Aorta (tissue), 5 donors: ENCODE measurements at regions of chr11 and their contacts with region 1.

Region 1: DNA sequence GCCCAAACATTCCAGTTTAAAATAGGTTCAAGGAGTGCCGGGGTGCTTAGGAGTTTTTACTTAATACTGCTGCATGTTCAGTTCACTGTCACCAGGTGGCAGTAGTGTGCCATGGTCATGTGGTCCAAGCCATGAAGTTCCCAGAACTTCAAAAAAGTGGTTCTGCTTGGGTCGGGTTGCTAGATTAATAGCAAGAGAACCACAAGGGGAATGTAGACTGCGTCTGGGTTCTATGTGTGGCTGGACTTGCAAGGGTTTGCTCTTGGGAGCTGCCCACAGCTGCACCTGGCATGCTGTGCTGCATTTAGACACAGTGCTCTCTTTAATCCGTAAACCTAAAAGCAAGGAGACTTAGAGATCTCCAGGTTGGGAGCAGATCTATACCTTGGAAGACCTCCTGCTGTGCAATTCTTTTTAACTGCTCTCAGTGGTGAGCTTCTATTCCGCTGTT is 6.5 kb upstream of the SPON1 start:
- DNase-seq: peak; percentile 66 to 73
- ATAC-seq: peak; percentile 80
- H3K4me3 ChIP-seq: no peak overlapping the region
- H3K27ac ChIP-seq: no peak overlapping the region
- H3K4me1 ChIP-seq: no peaks in the 10 kb centered on the region
- H3K27me3 ChIP-seq: peaks cover 0 to 2% of the 10 kb centered on the region in 2 donors

Region 2: DNA sequence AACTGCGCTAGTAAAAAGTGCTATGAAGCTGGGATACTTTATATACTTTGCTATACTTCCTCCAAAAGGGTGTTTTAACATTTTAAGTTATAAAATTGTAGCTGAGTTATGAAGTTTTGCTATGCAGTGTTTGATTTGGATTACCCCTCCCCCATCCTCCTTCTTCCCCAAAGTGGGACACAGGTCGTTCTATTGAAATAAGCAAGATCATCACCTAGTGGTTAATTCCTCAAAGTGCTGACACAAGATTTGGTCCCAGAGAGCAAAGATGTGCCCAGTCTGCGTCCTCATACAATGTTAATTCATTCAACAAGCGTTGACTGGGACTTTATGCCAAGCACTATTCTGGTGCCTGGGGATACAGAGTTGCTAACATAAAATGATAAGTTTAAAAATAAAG is 85.0 kb after region 1 on chr11:
- intact Hi-C with region 1: loop called in 1 of 2 experiments (anchors 5 kb)
- DNase-seq: no peak
- ATAC-seq: no peak
- H3K4me3 ChIP-seq: no peak overlapping the region
- H3K27ac ChIP-seq: no peak overlapping the region
- H3K4me1 ChIP-seq: peaks cover 0 to 3% of the 10 kb centered on the region in 2 donors
- H3K27me3 ChIP-seq: no peaks in the 10 kb centered on the region

Region 3: GRCh38 chr11:14148653-14149273 is 192.8 kb after region 1 on chr11:
- intact Hi-C with region 1: loop called (anchors 2 to 5 kb)
- DNase-seq: no peak
- ATAC-seq: peak; percentile 71
- H3K4me3 ChIP-seq: no peak overlapping the region
- H3K27ac ChIP-seq: no peak overlapping the region
- H3K4me1 ChIP-seq: no peaks in the 10 kb centered on the region
- H3K27me3 ChIP-seq: no peaks in the 10 kb centered on the region

Region 4: GRCh38 chr11:14249121-14249963 is 293.3 kb after region 1 on chr11:
- intact Hi-C with region 1: loop called (anchors 1 kb)
- DNase-seq: peak; percentile 64 to 87
- ATAC-seq: peak; percentile 62
- H3K4me3 ChIP-seq: no peak overlapping the region
- H3K27ac ChIP-seq: no peak overlapping the region
- H3K4me1 ChIP-seq: no peaks in the 10 kb centered on the region
- H3K27me3 ChIP-seq: no peaks in the 10 kb centered on the region